Activated CD8-positive, alpha-beta T cell treated with anti-CD3 and anti-CD28 coated beads for 36 hours (primary cell): ENCODE measurements at regions of chr2 and their contacts with region 1.

Region 1: DNA sequence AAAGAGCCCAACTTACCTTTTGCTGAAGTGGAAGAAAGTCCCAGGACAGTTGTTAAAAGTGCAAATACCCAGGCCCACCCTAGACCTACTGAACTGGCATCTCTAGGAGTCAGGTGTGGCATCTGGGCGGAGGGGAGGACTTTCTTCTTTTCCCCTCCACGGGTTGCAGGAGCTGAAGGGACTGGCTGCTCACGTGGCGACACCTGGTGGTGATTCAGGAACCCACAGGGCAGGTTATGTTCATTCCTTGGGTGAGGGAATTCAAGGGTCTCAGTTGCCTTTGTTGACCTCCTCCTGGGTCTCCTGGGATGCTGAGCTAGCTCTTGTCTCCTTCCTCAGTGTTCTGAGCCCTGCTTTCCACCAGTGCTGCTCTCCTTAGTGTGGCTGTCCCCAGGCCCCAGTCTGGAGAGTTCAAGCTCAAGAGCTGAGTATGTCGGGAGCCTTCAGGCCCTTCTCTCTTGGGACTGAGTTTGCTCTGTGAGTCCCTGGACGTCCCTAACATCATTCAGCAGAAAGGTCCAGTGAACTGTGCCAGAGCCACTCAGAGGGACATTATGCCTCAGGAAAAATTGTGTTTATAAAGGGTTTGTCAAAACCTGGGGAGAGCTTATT is 56.9 kb downstream of the DYSF start:
- DNase-seq: peak; percentile 82
- ATAC-seq: peak; percentile 74
- H3K4me3 Mint-ChIP-seq: no peak overlapping the region
- H3K27ac Mint-ChIP-seq: no peak overlapping the region
- H3K4me1 Mint-ChIP-seq: no peaks in the 10 kb centered on the region
- H3K27me3 Mint-ChIP-seq: peaks cover 2% of the 10 kb centered on the region
- CTCF ChIP-seq: peak; percentile 80

Region 2: GRCh38 chr2:71460595-71461303 is 49.6 kb before region 1 on chr2:
- CTCF ChIA-PET with region 1: interaction called, 39 read pairs
- POLR2A ChIA-PET with region 1: no interaction called
- intact Hi-C with region 1: no loop called
- DNase-seq: no peak
- ATAC-seq: no peak
- H3K4me3 Mint-ChIP-seq: no peak overlapping the region
- H3K27ac Mint-ChIP-seq: no peak overlapping the region
- H3K4me1 Mint-ChIP-seq: peaks cover 2% of the 10 kb centered on the region
- H3K27me3 Mint-ChIP-seq: peaks cover 6% of the 10 kb centered on the region
- CTCF ChIP-seq: peak; percentile 67

Region 3: DNA sequence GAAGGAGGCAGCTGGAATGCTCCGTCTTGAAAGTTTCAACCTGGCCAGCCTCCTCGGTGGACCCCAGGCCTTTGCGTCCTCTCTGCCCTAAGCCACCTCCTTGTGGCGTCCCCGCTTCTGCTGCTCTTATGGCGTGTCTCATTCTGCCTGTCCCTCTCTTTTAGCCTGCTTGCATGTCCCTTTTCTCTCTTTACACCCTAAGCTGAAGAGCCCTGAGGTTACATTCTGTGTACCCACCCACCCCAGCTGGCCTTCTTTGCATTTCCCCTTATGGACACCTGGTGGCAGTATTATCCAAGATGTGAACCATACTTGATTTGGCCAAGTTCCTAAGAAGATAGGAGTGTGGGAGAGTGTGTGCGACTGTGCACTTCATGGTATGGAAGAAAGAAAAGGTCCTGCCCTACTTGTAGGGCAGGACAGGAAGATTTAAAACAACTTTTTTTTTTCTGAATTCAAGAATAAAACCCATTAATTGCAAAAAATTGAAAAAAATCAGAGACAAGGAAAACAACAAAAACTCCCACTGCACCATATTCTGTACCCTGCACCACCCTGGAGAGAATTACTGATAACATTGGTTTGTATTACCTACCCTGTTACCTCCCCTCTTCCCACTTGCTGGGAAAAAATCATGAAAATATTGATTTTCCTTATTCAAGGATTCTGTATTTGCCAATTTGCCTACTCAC is 20.5 kb after region 1 on chr2:
- CTCF ChIA-PET with region 1: interaction called, 15 read pairs
- POLR2A ChIA-PET with region 1: no interaction called
- intact Hi-C with region 1: no loop called
- DNase-seq: peak; percentile 34
- ATAC-seq: peak; percentile 83
- H3K4me3 Mint-ChIP-seq: no peak overlapping the region
- H3K27ac Mint-ChIP-seq: no peak overlapping the region
- H3K4me1 Mint-ChIP-seq: no peaks in the 10 kb centered on the region
- H3K27me3 Mint-ChIP-seq: peaks cover 14% of the 10 kb centered on the region
- CTCF ChIP-seq: peak; percentile 67